Endothelial cell of umbilical vein (primary cell): ENCODE measurements at regions of chr11 and their contacts with region 1.

Region 1: GRCh38 chr11:87037450-87038234 is at the start of gene TMEM135:
- DNase-seq: peak; percentile 94
- H3K4me3 ChIP-seq: peak within 1 kb of the TSS; percentile 32 to 70 (median 67)
- H3K27ac ChIP-seq: peak within 1 kb of the TSS; percentile 1
- H3K4me1 ChIP-seq: peaks cover 12% of the 10 kb centered on the region
- H3K27me3 ChIP-seq: no peaks in the 10 kb centered on the region
- CTCF ChIP-seq: no peak
- POLR2A ChIP-seq: peak; percentile 93
- total RNA-seq, gene TMEM135: 33.2 and 36.8 TPM in 2 replicates

Region 2: DNA sequence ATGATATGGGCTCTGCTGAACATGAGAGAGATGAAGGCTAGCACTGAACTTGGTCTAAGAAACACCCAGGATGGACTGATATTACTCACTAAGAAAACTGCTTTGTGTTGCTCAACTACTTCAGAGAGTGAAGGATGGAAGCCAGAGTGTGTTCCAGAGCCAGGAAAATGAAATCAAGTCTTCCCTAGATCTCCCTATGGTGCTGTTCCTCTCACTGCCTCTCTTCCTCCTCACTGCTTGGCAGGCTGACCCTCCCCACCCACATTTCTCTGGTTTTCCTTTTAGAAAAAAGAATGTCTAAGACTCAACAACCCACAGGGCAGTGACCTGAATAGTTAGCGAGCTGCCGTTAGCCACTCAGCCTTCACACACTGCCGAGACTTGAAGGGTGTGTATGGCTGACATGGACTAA is 597.3 kb before region 1 on chr11:
- CTCF ChIA-PET with region 1: no interaction called
- POLR2A ChIA-PET with region 1: no interaction called
- dilution Hi-C with region 1: no loop called
- intact Hi-C with region 1: no loop called
- DNase-seq: no peak
- H3K4me3 ChIP-seq: no peak overlapping the region
- H3K27ac ChIP-seq: no peak overlapping the region
- H3K4me1 ChIP-seq: peaks cover 7% of the 10 kb centered on the region
- H3K27me3 ChIP-seq: no peaks in the 10 kb centered on the region
- CTCF ChIP-seq: no peak
- POLR2A ChIP-seq: no peak

Region 3: DNA sequence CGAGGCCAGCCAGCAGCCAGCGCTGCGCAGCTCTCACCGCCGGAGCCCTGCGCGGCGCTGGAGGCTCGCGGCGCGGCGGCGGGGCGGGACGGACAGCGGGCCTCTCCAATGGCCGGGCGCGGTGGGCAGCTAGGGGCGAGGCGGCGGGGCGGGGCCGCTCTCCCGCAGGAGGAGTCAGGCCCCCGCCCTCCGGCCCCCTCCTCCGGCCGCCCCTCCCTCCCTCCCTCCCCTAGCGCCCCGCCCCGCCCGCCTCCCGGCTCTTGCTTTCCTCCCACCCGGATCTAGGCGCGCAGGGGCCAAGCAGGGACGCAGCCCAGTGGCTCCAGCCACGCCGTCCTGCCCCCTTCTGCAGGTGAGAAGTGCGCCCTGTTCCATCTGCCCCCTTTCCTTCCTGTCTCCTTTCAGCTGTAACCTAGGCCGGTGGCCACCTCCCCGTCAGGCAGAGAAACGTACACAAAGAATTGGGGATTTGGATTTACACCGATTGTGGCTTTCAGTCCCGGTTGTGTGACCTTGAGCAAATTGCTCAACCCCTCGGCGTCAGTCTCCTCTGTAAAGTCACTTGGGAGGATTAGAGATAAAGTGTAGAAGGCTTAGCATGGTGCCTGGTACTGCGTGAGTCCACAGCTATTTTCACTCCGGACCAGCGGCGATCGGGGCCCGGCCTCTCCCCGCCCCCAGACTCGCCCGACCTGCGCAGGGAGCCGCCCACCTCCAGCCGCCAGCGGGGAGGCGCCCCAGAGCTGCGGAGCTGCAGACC is 82.1 kb before region 1 on chr11 and contains the start of gene FZD4:
- CTCF ChIA-PET with region 1: interaction called, 4 read pairs
- POLR2A ChIA-PET with region 1: no interaction called
- dilution Hi-C with region 1: no loop called
- intact Hi-C with region 1: loop called (anchors 1 kb)
- DNase-seq: peak; percentile 92
- H3K4me3 ChIP-seq: peak within 1 kb of the TSS; percentile 75 to 98 (median 95)
- H3K27ac ChIP-seq: peak within 1 kb of the TSS; percentile 75
- H3K4me1 ChIP-seq: peaks cover 30% of the 10 kb centered on the region
- H3K27me3 ChIP-seq: no peaks in the 10 kb centered on the region
- CTCF ChIP-seq: peak in 1 of 2 donors; percentile 30
- POLR2A ChIP-seq: peak; percentile 99
- total RNA-seq, gene FZD4: 109 and 112 TPM in 2 replicates

Region 4: DNA sequence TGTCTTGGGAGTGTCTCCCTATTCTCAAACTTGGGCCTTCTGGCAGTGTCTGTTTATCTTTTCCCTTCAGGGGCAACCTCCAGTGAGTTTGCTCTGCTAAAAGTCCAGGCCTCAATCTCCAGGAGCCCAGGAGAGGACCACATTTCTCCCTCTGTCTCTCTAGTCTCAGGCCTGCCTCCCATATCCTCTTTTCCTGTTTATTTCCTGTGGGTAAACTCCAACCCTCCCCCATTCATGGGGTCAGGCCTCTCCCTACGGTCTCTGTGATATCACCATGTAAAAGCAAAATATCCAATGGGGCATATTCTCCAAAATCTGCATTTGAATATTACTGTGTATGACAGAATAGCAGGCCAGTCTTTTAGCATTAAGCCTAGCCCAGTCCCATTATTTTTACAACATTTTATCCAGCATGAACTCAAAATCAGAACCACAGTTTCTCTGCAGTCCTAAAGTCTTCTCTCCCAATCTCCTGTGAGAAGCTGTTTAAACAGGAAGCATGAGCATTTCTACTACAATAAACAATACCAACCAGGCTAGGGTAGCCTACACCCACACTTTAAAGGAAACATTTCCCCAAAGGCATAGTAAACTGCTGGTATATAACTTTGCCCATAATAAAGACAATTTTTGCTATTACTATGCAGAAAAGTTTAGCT is 17.9 kb before region 1 on chr11:
- CTCF ChIA-PET with region 1: no interaction called
- POLR2A ChIA-PET with region 1: no interaction called
- dilution Hi-C with region 1: no loop called
- intact Hi-C with region 1: loop called (anchors 2 kb)
- DNase-seq: peak; percentile 58
- H3K4me3 ChIP-seq: no peak overlapping the region
- H3K27ac ChIP-seq: no peak overlapping the region
- H3K4me1 ChIP-seq: peaks cover 12% of the 10 kb centered on the region
- H3K27me3 ChIP-seq: no peaks in the 10 kb centered on the region
- CTCF ChIP-seq: no peak
- POLR2A ChIP-seq: no peak

Region 5: DNA sequence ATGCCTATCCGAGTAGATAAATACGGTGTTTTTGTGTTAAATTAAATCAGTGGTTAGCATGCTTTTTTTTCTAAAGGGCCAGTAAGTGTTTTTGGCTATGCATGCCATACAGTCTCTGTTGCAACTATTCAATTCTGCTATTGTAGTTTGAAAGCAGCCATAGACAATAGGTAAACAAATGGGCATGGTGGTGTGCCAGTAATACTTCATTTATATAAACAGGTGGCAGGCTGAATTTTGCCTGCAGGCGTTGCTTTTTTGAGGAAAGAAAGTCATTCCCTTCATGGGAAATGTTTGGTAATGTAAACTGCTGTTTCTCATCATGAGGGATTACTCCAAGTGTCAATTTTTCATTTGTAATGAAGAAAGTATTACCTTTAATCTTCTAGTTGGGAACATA is 106.6 kb after region 1 on chr11:
- CTCF ChIA-PET with region 1: no interaction called
- POLR2A ChIA-PET with region 1: no interaction called
- dilution Hi-C with region 1: no loop called
- intact Hi-C with region 1: no loop called
- DNase-seq: no peak
- H3K4me3 ChIP-seq: no peak overlapping the region
- H3K27ac ChIP-seq: no peak overlapping the region
- H3K4me1 ChIP-seq: peaks cover 8% of the 10 kb centered on the region
- H3K27me3 ChIP-seq: no peaks in the 10 kb centered on the region
- CTCF ChIP-seq: no peak
- POLR2A ChIP-seq: no peak

Region 6: DNA sequence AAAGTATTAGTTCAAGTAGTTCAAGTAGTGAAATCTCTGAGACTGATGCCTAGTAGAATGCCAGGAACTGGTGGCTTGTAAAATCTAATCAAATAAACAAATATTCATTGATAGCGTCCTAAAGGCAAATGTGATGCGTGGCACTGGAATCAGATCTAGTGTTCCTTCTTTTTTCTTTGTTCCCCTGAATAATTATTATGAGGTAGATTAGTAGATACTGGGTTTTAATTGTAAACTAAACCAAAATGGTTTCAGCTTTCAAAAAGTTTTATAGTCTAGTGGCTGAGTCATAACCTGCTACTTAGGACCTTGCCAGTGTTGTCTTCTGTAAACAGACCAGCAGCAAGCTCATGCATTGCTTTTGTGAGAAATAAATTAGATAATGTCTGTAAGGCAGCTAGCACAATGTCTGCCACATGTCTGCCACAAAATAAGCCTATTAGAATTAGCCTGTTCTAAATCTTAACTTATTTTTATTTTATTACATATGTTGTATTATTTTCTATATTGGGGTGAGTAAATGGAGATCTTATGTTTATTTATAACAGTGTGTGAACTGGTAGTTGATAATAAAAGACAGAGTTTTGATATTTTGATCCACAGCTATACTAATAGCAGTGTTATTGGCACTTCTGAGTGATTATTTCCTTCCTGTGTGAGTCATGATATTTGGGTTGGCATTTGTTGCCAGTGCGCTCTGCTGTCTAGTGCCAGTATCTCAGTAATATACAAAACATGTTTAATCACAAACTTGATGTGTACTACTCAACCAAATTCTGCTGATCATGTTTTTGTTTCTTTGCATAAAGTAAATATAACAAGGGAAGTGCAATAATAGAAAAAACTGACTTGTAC is 135.8 kb after region 1 on chr11:
- CTCF ChIA-PET with region 1: no interaction called
- POLR2A ChIA-PET with region 1: interaction called, 4 read pairs
- dilution Hi-C with region 1: no loop called
- intact Hi-C with region 1: loop called (anchors 2 kb)
- DNase-seq: peak; percentile 94
- H3K4me3 ChIP-seq: no peak overlapping the region
- H3K27ac ChIP-seq: peak overlapping the region; percentile 70
- H3K4me1 ChIP-seq: peaks cover 25% of the 10 kb centered on the region
- H3K27me3 ChIP-seq: no peaks in the 10 kb centered on the region
- CTCF ChIP-seq: no peak
- POLR2A ChIP-seq: no peak

Region 7: GRCh38 chr11:87281496-87281895 is 243.9 kb after region 1 on chr11:
- CTCF ChIA-PET with region 1: interaction called, 4 read pairs
- POLR2A ChIA-PET with region 1: no interaction called
- dilution Hi-C with region 1: no loop called
- intact Hi-C with region 1: loop called (anchors 2 kb)
- DNase-seq: peak; percentile 96
- H3K4me3 ChIP-seq: no peak overlapping the region
- H3K27ac ChIP-seq: no peak overlapping the region
- H3K4me1 ChIP-seq: peaks cover 9% of the 10 kb centered on the region
- H3K27me3 ChIP-seq: no peaks in the 10 kb centered on the region
- CTCF ChIP-seq: peak in 1 of 2 donors; percentile 22
- POLR2A ChIP-seq: no peak